Activated B cell treated with CpG ODN at 0.5 μM for 24 hours (primary cell): ENCODE measurements at regions of chr12 and their contacts with region 1.

Region 1: GRCh38 chr12:12916135-12916944 is 25.0 kb downstream of the GPRC5A start:
- DNase-seq: peak; percentile 73
- ATAC-seq: peak; percentile 99
- H3K4me3 Mint-ChIP-seq: no peak overlapping the region
- H3K27ac Mint-ChIP-seq: no peak overlapping the region
- H3K4me1 Mint-ChIP-seq: peaks cover 8% of the 10 kb centered on the region
- H3K27me3 Mint-ChIP-seq: peaks cover 16% of the 10 kb centered on the region
- CTCF ChIP-seq: peak; percentile 86

Region 2: GRCh38 chr12:12736759-12737676 is 179.3 kb before region 1 on chr12:
- CTCF ChIA-PET with region 1: no interaction called
- POLR2A ChIA-PET with region 1: no interaction called
- intact Hi-C with region 1: no loop called
- DNase-seq: peak; percentile 19
- ATAC-seq: peak; percentile 91
- H3K4me3 Mint-ChIP-seq: peak overlapping the region; percentile 30
- H3K27ac Mint-ChIP-seq: peak overlapping the region; percentile 72
- H3K4me1 Mint-ChIP-seq: peaks cover 13% of the 10 kb centered on the region
- H3K27me3 Mint-ChIP-seq: no peaks in the 10 kb centered on the region
- CTCF ChIP-seq: peak; percentile 19

Region 3: DNA sequence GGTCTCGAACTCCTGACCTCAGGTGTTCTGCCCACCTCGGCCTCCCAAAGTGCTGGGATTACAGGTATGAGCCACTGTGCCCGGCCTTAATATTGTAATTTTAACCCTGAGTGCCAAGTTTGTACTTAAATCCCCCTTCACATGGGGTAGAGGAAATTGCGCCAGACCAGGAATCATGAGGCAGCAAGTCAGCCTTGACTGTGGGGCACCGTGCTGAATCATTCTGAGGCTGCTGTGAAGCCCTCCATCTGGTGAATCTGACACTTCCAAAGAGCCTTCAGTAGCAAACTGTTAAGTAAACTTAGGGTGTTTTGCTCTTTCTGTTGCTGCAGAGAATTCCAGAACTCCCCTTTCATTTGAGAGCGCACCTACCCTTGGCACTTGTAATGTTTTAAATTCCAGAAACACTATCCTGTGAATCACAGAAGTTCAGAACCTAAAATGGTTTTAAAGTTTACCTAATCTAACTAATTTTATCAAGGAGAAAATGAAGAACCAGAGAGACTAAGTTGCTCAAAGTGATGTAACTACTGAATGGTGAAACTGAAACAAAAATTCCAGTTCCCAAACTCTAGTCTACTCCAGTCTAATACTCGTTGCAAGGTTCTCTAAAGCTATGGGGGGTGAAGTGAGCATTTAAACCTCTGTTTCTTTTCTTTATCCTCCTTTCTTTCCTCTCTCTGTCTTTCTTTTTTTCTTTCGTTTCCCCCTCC is 76.2 kb after region 1 on chr12:
- CTCF ChIA-PET with region 1: no interaction called
- POLR2A ChIA-PET with region 1: no interaction called
- intact Hi-C with region 1: loop called (anchors 1 kb)
- DNase-seq: no peak
- ATAC-seq: no peak
- H3K4me3 Mint-ChIP-seq: no peak overlapping the region
- H3K27ac Mint-ChIP-seq: no peak overlapping the region
- H3K4me1 Mint-ChIP-seq: peaks cover 17% of the 10 kb centered on the region
- H3K27me3 Mint-ChIP-seq: no peaks in the 10 kb centered on the region
- CTCF ChIP-seq: no peak

Region 4: DNA sequence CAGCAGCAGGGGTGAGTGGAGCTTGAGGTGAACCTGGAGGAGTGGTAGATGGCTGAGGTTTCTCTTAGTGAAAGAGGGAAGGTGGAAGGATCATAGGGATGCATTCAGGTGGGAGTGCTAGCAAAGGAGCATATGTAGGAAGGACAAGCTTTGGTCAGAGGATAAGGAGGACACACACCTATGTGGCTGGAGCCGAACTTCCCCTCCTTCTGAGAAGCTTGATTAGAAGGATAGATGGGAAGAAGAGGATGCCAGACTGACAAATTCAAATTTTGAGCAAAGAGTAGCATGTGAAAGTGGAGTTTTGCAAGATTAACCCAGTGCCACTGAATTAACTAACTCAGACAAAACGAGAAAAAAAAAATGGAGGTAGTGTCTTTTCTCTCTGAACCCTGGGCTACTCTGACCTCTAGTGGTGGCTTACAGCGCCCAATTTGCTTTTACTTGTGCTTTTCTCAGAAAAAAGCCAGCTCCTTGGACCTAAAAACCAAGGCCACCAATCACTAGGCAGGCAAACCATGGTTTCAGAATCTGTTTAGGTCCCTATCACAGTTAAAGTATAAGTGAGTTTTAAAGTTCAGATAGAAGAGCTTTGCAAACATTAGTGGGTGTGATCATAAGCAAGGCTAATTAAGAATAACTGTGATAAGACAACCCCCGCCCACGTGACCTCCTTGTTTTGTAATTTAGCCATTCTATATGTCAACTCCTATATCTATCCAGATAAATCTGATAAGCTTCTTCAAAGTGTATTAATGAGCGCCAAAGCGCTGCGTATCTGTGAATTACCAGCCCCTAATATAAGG is 295.7 kb after region 1 on chr12:
- CTCF ChIA-PET with region 1: interaction called, 167 read pairs
- POLR2A ChIA-PET with region 1: interaction called, 6 read pairs
- intact Hi-C with region 1: loop called (anchors 1 kb)
- DNase-seq: peak; percentile 31
- ATAC-seq: peak; percentile 77
- H3K4me3 Mint-ChIP-seq: no peak overlapping the region
- H3K27ac Mint-ChIP-seq: no peak overlapping the region
- H3K4me1 Mint-ChIP-seq: peaks cover 4% of the 10 kb centered on the region
- H3K27me3 Mint-ChIP-seq: peaks cover 18% of the 10 kb centered on the region
- CTCF ChIP-seq: no peak

Region 5: DNA sequence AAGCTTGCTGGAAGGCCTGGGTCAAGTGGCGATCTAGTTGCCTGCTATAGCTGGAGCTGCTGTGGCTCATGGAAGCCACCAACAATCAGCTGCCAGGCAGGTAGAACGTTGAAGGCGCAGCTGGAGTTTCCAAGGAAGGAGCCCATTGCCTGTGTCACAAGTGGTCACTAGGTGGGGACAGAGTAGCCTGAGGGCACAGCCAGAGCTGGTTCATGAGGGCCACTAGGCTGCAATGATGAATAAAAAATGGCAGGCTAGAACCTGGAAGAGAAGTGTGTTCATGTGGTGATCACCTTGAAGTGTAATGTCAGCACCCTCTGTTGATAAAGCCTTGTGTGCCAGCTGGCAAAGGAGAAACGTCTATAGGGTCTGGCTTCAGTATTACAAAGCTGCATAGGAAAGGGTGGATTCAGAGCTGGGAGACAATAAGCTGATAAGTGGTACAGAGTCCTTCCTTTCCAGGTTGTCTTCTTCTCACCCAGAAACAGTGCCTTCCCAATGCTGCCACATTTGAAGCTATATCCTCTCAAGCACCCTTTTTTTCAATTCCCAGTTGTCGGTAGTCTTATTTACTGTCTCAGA is 446.0 kb after region 1 on chr12:
- CTCF ChIA-PET with region 1: no interaction called
- POLR2A ChIA-PET with region 1: no interaction called
- intact Hi-C with region 1: loop called (anchors 5 kb)
- DNase-seq: peak; percentile 33
- ATAC-seq: peak; percentile 84
- H3K4me3 Mint-ChIP-seq: no peak overlapping the region
- H3K27ac Mint-ChIP-seq: no peak overlapping the region
- H3K4me1 Mint-ChIP-seq: no peaks in the 10 kb centered on the region
- H3K27me3 Mint-ChIP-seq: peaks cover 11% of the 10 kb centered on the region
- CTCF ChIP-seq: peak; percentile 63